Activated naive CD4-positive, alpha-beta T cell treated with anti-CD3 and anti-CD28 coated beads, Interleukin-2, amount 10 ng/mL, durations not matched to agents 7 days and 5 days (primary cell): ENCODE measurements at regions of chr10 and their contacts with region 1.

Region 1: GRCh38 chr10:99435986-99436638 is 5.7 kb upstream of the GOT1 start:
- DNase-seq: no peak
- H3K4me3 Mint-ChIP-seq: no peak overlapping the region
- H3K27ac Mint-ChIP-seq: no peak overlapping the region
- H3K4me1 Mint-ChIP-seq: peaks cover 28% of the 10 kb centered on the region
- H3K27me3 Mint-ChIP-seq: no peaks in the 10 kb centered on the region

Region 2: DNA sequence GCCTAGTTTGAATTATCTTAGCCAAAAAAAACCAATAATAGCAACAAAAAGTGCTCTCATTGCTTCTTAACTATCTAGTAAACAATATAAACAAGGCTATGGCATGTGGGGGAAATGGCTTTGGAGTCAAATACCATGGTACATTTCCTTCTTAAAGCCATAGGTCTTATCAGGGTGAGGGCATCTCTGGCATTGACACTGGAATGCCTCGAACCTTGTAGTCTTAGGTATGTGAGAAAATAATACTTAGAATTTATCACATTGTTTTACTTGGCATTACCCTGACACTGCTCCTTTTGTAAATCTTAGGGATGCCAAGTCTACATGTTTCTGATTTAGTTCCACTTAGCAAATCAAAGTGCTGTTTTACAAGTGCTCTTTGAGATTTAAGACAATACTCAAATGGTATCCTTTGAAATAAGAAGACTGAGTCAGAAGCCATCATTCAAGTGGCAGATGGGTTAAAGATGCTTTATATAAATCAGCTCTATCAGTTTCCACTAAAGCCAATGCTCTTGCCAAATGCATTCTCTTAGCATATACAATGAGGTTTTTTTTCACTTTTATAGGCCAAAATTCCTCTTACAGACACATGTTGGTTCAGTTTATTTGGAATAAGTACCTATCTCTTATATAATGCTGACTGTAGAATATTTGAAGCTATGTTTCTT is 355.7 kb before region 1 on chr10:
- CTCF ChIA-PET with region 1: no interaction called
- DNase-seq: no peak
- H3K4me3 Mint-ChIP-seq: no peak overlapping the region
- H3K27ac Mint-ChIP-seq: no peak overlapping the region
- H3K4me1 Mint-ChIP-seq: no peaks in the 10 kb centered on the region
- H3K27me3 Mint-ChIP-seq: no peaks in the 10 kb centered on the region

Region 3: DNA sequence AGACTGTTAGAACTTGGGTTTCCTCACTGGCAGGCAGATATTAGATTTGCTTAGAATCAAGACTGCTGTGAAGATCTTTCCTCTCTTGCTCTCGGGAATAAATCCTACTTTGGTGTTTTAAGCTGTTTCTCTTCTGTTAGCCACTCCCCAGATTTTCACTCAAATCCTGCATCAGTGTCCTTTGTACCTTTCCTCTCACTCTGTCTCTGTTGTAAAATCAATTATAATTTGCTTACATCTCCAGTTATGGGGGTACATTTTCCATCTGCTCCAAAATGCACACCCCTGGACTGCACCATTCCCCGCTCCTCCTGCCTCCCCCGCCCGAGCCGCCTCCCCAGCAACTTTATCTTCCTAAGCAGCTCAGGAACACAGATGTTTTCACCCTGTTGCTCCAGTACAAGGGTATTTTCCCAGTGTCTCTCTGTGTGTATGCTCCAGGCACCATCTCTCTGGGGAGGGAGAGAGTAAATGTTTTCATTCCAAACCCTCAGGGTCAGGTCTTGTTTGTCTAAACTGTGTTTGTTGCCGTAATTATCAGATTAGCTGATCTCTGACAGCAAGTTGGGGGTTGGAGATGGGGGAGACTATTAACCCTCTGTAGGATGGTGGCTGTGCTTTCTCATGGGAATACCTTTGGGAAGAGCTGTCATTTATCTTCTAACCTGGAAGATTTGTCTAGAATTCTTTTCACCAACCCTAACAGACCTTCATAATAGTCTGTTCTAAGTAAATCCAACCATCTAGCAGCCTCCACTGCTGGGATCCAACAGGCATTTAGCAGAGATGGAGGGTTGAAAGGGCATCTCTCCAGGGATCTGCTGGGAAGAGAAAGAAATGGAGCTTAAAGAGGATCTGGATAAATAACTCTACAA is 14.7 kb after region 1 on chr10:
- CTCF ChIA-PET with region 1: interaction called, 16 read pairs
- DNase-seq: no peak
- H3K4me3 Mint-ChIP-seq: no peak overlapping the region
- H3K27ac Mint-ChIP-seq: no peak overlapping the region
- H3K4me1 Mint-ChIP-seq: no peaks in the 10 kb centered on the region
- H3K27me3 Mint-ChIP-seq: peaks cover 51% of the 10 kb centered on the region

Region 4: GRCh38 chr10:99548041-99548530 is 112.0 kb after region 1 on chr10:
- CTCF ChIA-PET with region 1: interaction called, 22 read pairs
- DNase-seq: no peak
- H3K4me3 Mint-ChIP-seq: no peak overlapping the region
- H3K27ac Mint-ChIP-seq: no peak overlapping the region
- H3K4me1 Mint-ChIP-seq: no peaks in the 10 kb centered on the region
- H3K27me3 Mint-ChIP-seq: peaks cover 79% of the 10 kb centered on the region

Region 5: DNA sequence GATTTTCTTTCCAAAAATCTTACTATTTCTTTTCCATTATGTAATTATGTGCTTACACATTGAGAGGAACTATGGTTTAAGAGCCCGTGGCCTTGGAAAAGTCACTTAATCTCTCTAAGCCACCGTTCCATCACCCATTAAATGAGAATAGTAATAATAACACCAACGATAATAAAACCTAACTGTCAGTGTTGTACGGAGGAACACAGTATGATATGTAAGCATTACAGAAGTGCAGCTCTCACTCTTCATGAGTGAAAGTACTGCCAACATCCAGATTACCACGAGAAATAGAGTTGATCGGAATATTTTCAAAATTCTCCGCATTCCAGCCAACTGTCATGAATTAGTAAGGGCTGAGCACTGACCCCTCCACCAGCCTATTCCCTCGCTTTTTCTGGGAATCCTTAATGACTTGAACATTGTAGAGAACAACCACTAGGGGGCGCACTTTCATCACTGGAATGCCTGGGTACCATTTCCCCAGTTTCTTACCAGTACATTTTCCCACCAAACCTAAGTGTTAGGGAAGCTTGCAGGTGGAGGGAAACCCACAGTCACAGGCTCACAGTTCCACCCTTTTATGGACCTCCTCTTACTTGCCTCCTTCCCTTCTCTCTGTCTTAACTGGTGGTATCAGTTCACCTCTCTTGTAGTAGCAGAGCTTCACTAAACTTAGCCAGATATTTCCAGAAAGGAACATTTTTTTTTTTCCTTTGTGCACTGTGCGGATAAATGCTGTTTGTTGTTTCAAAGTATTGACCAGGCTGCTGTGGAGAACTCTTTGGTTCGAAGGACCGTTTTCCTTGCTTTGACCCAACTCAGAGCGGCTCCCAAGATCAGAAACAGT is 124.4 kb after region 1 on chr10:
- CTCF ChIA-PET with region 1: interaction called, 10 read pairs
- DNase-seq: peak; percentile 57
- H3K4me3 Mint-ChIP-seq: no peak overlapping the region
- H3K27ac Mint-ChIP-seq: no peak overlapping the region
- H3K4me1 Mint-ChIP-seq: peaks cover 6% of the 10 kb centered on the region
- H3K27me3 Mint-ChIP-seq: peaks cover 43% of the 10 kb centered on the region

Region 6: GRCh38 chr10:99612167-99612831 is 176.2 kb after region 1 on chr10:
- CTCF ChIA-PET with region 1: interaction called, 20 read pairs
- DNase-seq: peak; percentile 34
- H3K4me3 Mint-ChIP-seq: no peak overlapping the region
- H3K27ac Mint-ChIP-seq: no peak overlapping the region
- H3K4me1 Mint-ChIP-seq: peaks cover 27% of the 10 kb centered on the region
- H3K27me3 Mint-ChIP-seq: no peaks in the 10 kb centered on the region